OCI-LY7 (cell line): ENCODE measurements at regions of chr17 and their contacts with region 1.

Region 1: GRCh38 chr17:58447039-58447975 is 30.0 kb upstream of the RNF43 start:
- DNase-seq: peak; percentile 85
- H3K4me3 ChIP-seq: no peak overlapping the region
- H3K27ac ChIP-seq: no peak overlapping the region
- H3K4me1 ChIP-seq: no peaks in the 10 kb centered on the region
- CTCF ChIP-seq: peak; percentile 93

Region 2: GRCh38 chr17:58200017-58200633 is 247.2 kb before region 1 on chr17:
- CTCF ChIA-PET with region 1: no interaction called
- POLR2A ChIA-PET with region 1: no interaction called
- intact Hi-C with region 1: loop called (anchors 1 kb)
- DNase-seq: peak; percentile 48
- H3K4me3 ChIP-seq: no peak overlapping the region
- H3K27ac ChIP-seq: no peak overlapping the region
- H3K4me1 ChIP-seq: no peaks in the 10 kb centered on the region
- CTCF ChIP-seq: peak; percentile 80

Region 3: DNA sequence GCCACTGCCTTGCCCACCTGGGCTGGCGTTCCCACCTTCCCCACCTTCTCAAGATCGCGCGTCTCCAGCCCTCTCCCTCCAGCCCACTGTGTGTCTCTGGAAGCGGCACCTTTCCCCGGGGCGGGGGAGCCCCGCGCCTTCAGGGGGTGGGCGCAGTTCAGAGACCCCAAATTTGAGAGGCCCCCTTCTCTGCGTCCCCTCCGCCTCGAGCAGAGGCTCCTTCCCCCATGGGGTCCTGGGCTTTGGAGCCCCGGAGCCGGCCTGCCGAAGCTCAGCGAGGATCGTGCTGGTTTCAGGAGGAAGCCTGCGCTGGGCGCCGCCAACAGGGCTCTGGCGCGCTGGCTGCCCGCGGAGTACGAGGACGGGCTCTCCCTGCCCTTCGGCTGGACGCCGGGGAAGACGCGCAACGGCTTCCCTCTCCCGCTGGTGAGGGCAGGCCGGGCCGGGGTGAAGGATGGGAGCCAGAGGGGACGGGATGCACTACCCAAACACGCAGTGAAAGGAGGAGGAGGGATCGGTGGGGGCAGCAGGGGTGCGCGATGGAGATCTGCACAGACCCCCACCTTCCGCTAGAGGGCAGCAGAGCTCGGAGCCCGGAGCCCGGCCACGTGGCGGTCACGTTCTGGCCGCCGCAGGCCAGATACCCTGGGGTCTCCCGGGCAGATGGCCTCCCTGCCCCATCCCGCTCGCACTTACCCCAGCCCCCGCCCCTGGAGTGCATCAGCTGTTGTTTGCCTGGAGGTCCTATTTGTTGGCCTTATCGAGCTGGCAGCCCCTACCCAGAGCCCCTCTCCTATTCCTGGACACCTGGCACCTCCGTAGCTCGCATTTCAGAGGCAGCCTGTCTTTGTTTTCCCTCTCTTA is 197.8 kb before region 1 on chr17:
- CTCF ChIA-PET with region 1: no interaction called
- POLR2A ChIA-PET with region 1: no interaction called
- intact Hi-C with region 1: loop called (anchors 1 kb)
- DNase-seq: peak; percentile 48
- H3K4me3 ChIP-seq: no peak overlapping the region
- H3K27ac ChIP-seq: no peak overlapping the region
- H3K4me1 ChIP-seq: no peaks in the 10 kb centered on the region
- CTCF ChIP-seq: peak; percentile 80

Region 4: DNA sequence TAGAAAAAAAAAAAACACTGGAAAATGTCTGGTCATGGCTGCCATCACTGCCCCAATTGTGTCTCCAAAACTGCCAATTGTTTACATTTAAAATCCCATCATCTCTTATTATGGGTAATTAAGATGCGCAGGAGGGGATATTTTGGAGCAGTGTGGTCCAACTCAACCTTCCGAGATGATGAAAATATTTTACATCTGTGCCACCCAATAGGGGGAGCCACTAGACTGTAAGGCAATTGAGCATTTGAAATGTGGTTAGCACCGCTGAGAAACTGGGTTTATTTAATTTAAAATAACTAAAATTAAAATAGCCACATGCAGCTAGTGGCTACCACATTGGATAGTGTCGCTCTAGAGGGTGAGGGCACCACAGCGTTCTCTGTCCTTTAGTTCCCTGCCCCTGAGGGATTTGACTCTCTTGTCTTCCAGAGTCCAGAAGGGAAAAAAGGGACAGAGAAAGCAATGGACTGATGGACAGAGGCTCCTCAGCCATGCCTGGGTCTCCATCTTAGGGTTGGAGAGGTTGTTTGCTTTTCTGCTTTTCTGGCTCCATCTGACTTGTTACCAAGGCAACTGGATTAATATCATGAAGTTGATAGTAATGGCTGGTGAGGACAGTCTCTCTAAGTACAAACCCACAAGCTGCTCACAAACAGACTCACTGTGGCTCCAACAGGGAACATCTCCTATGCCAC is 170.1 kb before region 1 on chr17:
- CTCF ChIA-PET with region 1: no interaction called
- POLR2A ChIA-PET with region 1: no interaction called
- intact Hi-C with region 1: loop called (anchors 1 kb)
- DNase-seq: peak; percentile 46
- H3K4me3 ChIP-seq: no peak overlapping the region
- H3K27ac ChIP-seq: no peak overlapping the region
- H3K4me1 ChIP-seq: no peaks in the 10 kb centered on the region
- CTCF ChIP-seq: peak; percentile 82

Region 5: GRCh38 chr17:58303971-58304725 is 143.2 kb before region 1 on chr17:
- CTCF ChIA-PET with region 1: no interaction called
- POLR2A ChIA-PET with region 1: interaction called, 3 read pairs
- intact Hi-C with region 1: loop called (anchors 1 kb)
- DNase-seq: peak; percentile 66
- H3K4me3 ChIP-seq: no peak overlapping the region
- H3K27ac ChIP-seq: no peak overlapping the region
- H3K4me1 ChIP-seq: peaks cover 22% of the 10 kb centered on the region
- CTCF ChIP-seq: peak; percentile 90

Region 6: GRCh38 chr17:58317421-58318064 is 129.8 kb before region 1 on chr17:
- CTCF ChIA-PET with region 1: interaction called, 5 read pairs
- POLR2A ChIA-PET with region 1: no interaction called
- intact Hi-C with region 1: loop called (anchors 1 kb)
- DNase-seq: peak; percentile 89
- H3K4me3 ChIP-seq: no peak overlapping the region
- H3K27ac ChIP-seq: peak overlapping the region; percentile 48
- H3K4me1 ChIP-seq: peaks cover 15% of the 10 kb centered on the region
- CTCF ChIP-seq: peak; percentile 90

Region 7: DNA sequence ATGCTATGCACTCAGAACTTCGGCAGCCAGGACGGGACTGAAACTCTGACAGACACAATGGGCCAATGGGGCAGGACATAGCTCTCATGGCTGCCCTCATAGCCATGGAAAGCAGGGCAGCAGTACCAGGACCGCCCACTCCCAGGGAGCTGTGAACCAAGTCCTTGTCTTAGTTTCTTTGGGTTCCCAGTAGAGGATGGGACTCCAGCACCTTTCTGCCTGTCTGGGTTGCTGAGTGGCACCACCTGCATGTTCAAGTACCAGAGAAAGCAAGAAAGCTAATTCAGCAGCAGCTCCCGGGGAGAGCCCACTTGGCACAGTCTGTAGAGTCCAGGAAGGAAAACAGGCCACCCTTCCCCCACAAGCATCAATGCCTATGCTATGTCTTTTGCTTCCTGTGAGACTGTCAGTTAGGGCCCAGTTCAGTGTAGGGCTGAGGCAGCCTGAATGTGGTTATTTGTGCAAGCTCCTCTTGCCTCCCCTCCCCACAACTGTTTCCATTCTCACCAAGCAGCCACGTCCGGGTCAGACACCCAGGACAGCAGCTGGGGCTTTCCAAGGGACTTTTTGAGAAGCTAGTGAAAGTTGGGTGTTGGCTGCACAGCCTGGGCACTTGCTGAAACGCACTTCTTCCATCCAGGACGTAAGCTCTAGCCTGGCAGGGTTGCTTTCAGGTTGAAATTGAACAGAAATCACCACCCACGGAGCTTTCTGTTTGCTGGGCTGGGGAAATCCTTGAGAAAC is 103.1 kb before region 1 on chr17:
- CTCF ChIA-PET with region 1: interaction called, 3 read pairs
- POLR2A ChIA-PET with region 1: no interaction called
- intact Hi-C with region 1: loop called (anchors 1 kb)
- DNase-seq: peak; percentile 95
- H3K4me3 ChIP-seq: peak overlapping the region; percentile 63
- H3K27ac ChIP-seq: peak overlapping the region; percentile 99
- H3K4me1 ChIP-seq: peaks cover 80% of the 10 kb centered on the region
- CTCF ChIP-seq: no peak

Region 8: GRCh38 chr17:58565780-58566189 is 118.5 kb after region 1 on chr17:
- CTCF ChIA-PET with region 1: no interaction called
- POLR2A ChIA-PET with region 1: no interaction called
- intact Hi-C with region 1: no loop called
- DNase-seq: peak; percentile 45
- H3K4me3 ChIP-seq: peak overlapping the region; percentile 38
- H3K27ac ChIP-seq: peak overlapping the region; percentile 80
- H3K4me1 ChIP-seq: peaks cover 80% of the 10 kb centered on the region
- CTCF ChIP-seq: no peak